OCI-LY7 (cell line): ENCODE measurements at regions of chr5 and their contacts with region 1.

Region 1: GRCh38 chr5:128009403-128009802 is 74.2 kb upstream of the SLC12A2 start:
- DNase-seq: no peak
- H3K4me3 ChIP-seq: no peak overlapping the region
- H3K27ac ChIP-seq: no peak overlapping the region
- H3K4me1 ChIP-seq: no peaks in the 10 kb centered on the region
- CTCF ChIP-seq: no peak

Region 2: GRCh38 chr5:127957183-127957582 is 52.2 kb before region 1 on chr5:
- CTCF ChIA-PET with region 1: no interaction called
- POLR2A ChIA-PET with region 1: no interaction called
- intact Hi-C with region 1: no loop called
- DNase-seq: no peak
- H3K4me3 ChIP-seq: no peak overlapping the region
- H3K27ac ChIP-seq: no peak overlapping the region
- H3K4me1 ChIP-seq: peaks cover 13% of the 10 kb centered on the region
- CTCF ChIP-seq: no peak

Region 3: GRCh38 chr5:127997201-127997704 is 12.2 kb before region 1 on chr5:
- CTCF ChIA-PET with region 1: no interaction called
- POLR2A ChIA-PET with region 1: interaction called, 10 read pairs
- intact Hi-C with region 1: no loop called
- DNase-seq: no peak
- H3K4me3 ChIP-seq: no peak overlapping the region
- H3K27ac ChIP-seq: no peak overlapping the region
- H3K4me1 ChIP-seq: no peaks in the 10 kb centered on the region
- CTCF ChIP-seq: no peak

Region 4: GRCh38 chr5:129244478-129244877 is 1235.1 kb after region 1 on chr5:
- CTCF ChIA-PET with region 1: no interaction called
- POLR2A ChIA-PET with region 1: no interaction called
- intact Hi-C with region 1: no loop called
- DNase-seq: no peak
- H3K4me3 ChIP-seq: no peak overlapping the region
- H3K27ac ChIP-seq: no peak overlapping the region
- H3K4me1 ChIP-seq: no peaks in the 10 kb centered on the region
- CTCF ChIP-seq: no peak